K562 (cell line): ENCODE measurements at regions of chr12 and their contacts with region 1.

Region 1: DNA sequence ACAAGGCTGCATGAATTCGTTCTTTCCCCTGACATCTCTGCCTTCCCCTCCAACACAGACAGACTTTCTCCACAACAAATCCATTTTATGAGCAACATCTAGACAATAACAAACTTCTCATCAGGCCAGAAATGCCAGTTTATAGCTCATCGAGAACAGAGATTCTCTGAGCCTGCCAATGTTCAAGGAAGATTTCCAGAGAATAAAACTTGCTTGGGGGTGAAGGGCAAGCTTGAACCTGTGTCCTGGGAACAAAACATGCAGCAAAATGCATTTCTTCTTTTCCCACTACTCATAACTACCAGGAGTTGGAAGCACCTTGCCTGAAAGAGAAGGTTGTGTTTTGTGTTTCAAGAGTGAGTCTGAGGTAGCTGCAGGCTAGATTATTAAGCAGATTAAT is 6.8 kb downstream of the MAP1LC3B2 start:
- DNase-seq: no peak
- ATAC-seq: no peak
- H3K4me3 ChIP-seq: no peak overlapping the region
- H3K27ac ChIP-seq: no peak overlapping the region
- H3K4me1 ChIP-seq: peaks cover 10 to 14% of the 10 kb centered on the region in 2 experiments
- H3K27me3 ChIP-seq: no peaks in the 10 kb centered on the region
- CTCF ChIP-seq: no peak
- EP300 ChIP-seq: no peak
- POLR2A ChIP-seq: no peak
- RAD21 ChIP-seq: no peak

Region 2: GRCh38 chr12:116533343-116534251 is 32.4 kb before region 1 on chr12:
- CTCF ChIA-PET with region 1: no interaction called
- POLR2A ChIA-PET with region 1: no interaction called
- in situ Hi-C with region 1: no loop called
- intact Hi-C with region 1: no loop called
- DNase-seq: peak; percentile 89 to 99 (median 98)
- ATAC-seq: peak; percentile 97
- H3K4me3 ChIP-seq: peak overlapping the region; percentile 53
- H3K27ac ChIP-seq: peak overlapping the region; percentile 73
- H3K4me1 ChIP-seq: peaks cover 21 to 22% of the 10 kb centered on the region in 2 experiments
- H3K27me3 ChIP-seq: no peaks in the 10 kb centered on the region
- CTCF ChIP-seq: no peak
- EP300 ChIP-seq: peak; percentile 7; the same call in 1 of the 2 replicates
- POLR2A ChIP-seq: peak; percentile 53
- RAD21 ChIP-seq: peak in 1 of 2 experiments; percentile 12; a peak in 1 of 4 replicates

Region 3: DNA sequence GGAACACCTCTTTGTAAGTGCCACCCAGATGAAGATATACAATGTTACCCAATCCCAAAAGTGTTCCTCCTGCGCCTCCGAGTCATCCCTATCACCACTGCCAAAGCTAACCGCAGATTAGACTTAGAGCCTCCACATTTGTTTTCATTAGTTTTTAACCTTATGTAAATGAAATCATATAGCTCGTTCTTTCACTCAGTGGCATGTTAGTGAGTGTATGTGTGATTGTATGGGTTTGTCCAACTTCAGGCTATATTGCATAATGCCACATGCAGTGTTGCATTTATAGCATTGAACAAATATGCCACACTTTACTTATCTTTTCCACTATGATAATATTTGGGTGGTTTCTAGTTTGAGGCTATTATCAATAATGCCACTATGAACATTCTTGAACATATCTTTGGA is 11.2 kb after region 1 on chr12:
- CTCF ChIA-PET with region 1: no interaction called
- POLR2A ChIA-PET with region 1: interaction called, 10 read pairs
- in situ Hi-C with region 1: no loop called
- intact Hi-C with region 1: no loop called
- DNase-seq: peak in 1 of 4 experiments; percentile 38
- ATAC-seq: peak; percentile 63
- H3K4me3 ChIP-seq: no peak overlapping the region
- H3K27ac ChIP-seq: no peak overlapping the region
- H3K4me1 ChIP-seq: peaks cover 8 to 9% of the 10 kb centered on the region in 2 experiments
- H3K27me3 ChIP-seq: no peaks in the 10 kb centered on the region
- CTCF ChIP-seq: no peak
- EP300 ChIP-seq: no peak
- POLR2A ChIP-seq: no peak
- RAD21 ChIP-seq: no peak